Heart right ventricle (tissue), 16 donors: ENCODE measurements at regions of chr15 and their contacts with region 1.

Region 1: DNA sequence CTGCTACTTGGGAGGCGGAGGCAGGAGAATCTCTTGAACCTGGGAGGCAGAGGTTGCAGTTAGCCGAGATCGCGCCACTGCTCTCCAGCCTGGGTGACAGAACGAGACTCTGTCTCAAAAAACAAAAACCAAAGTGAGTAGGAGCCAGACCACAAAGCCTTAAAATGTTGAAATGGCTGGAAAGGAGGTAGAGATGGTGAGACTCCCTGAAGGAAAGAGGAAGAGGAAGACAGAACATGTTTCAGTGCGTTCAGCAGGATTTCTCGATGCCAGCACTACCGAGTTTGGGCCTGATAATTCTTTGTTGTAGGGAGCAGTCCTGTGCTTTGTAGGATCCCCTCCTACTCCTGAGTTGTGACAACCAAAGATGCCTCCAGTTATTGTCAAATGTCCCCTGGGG is 189.9 kb downstream of the AKAP13 start:
- DNase-seq: no peak
- ATAC-seq: peak in 1 of 8 donors; percentile 12
- H3K4me3 ChIP-seq: no peak overlapping the region
- H3K27ac ChIP-seq: peak overlapping the region in 4 of 10 donors; percentile 13 to 80 (median 24)
- H3K4me1 ChIP-seq: peaks cover 3 to 76% (median 43%) of the 10 kb centered on the region in 9 donors
- H3K27me3 ChIP-seq: no peaks in the 10 kb centered on the region
- CTCF ChIP-seq: no peak

Region 2: GRCh38 chr15:85527895-85528294 is 42.4 kb before region 1 on chr15:
- intact Hi-C with region 1: loop called in 1 of 10 experiments (anchors 5 kb)
- DNase-seq: peak in 1 of 2 donors; percentile 79
- ATAC-seq: peak; percentile 59 to 90 (median 80)
- H3K4me3 ChIP-seq: no peak overlapping the region
- H3K27ac ChIP-seq: peak overlapping the region; percentile 5 to 81 (median 73)
- H3K4me1 ChIP-seq: peaks cover 19 to 86% (median 69%) of the 10 kb centered on the region in 9 donors
- H3K27me3 ChIP-seq: no peaks in the 10 kb centered on the region
- CTCF ChIP-seq: no peak